ENCODE measurements at regions of chr6 and their contacts with region 1.

Region 1: GRCh38 chr6:15691250-15691869 is 28.5 kb upstream of the DTNBP1 start:
- DNase-seq: peak; percentile 89

Region 2: DNA sequence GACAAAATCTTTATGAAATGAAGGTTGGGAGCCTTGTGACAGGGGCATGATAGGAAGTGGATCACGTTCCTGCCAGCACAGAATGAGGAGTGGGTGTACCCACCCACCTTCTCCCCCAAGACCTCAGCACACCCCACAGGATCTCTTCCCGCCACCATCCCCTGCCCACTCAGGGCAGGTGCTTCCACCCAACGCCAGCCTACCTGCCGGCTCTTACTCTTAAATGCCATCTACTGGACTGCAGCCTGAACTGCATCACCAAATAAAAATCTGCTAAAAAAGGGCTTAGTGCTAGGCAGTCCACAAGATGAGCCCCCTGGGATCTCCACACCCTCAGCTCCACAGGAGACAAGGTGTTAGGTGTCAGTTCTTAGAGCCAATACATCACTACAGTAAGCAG is 49.1 kb before region 1 on chr6:
- in situ Hi-C with region 1: no loop called
- DNase-seq: no peak

Region 3: GRCh38 chr6:16183187-16183664 is 491.9 kb after region 1 on chr6:
- in situ Hi-C with region 1: loop called (anchors 25 kb)
- DNase-seq: peak; percentile 57

Region 4: GRCh38 chr6:16322666-16323312 is 631.4 kb after region 1 on chr6:
- in situ Hi-C with region 1: no loop called
- DNase-seq: peak; percentile 25

Measured in G401 (cell line).